ENCODE measurements at regions of chr20 and their contacts with region 1.

Region 1: GRCh38 chr20:54980103-54980960 is 504.9 kb downstream of the DOK5 start:
- DNase-seq: no peak
- H3K4me3 ChIP-seq: no peak overlapping the region
- H3K27ac ChIP-seq: no peak overlapping the region
- H3K4me1 ChIP-seq: no peaks in the 10 kb centered on the region
- H3K27me3 ChIP-seq: no peaks in the 10 kb centered on the region
- CTCF ChIP-seq: peak in 2 of 3 experiments; percentile 28 to 52; a peak in 2 of 4 replicates
- EP300 ChIP-seq: no peak
- POLR2A ChIP-seq: no peak
- RAD21 ChIP-seq: peak; percentile 68 to 71

Region 2: GRCh38 chr20:54957309-54957708 is 23.0 kb before region 1 on chr20:
- CTCF ChIA-PET with region 1: no interaction called
- POLR2A ChIA-PET with region 1: no interaction called
- DNase-seq: no peak
- H3K4me3 ChIP-seq: no peak overlapping the region
- H3K27ac ChIP-seq: no peak overlapping the region
- H3K4me1 ChIP-seq: no peaks in the 10 kb centered on the region
- H3K27me3 ChIP-seq: no peaks in the 10 kb centered on the region
- CTCF ChIP-seq: no peak
- EP300 ChIP-seq: no peak
- POLR2A ChIP-seq: no peak
- RAD21 ChIP-seq: no peak

Region 3: DNA sequence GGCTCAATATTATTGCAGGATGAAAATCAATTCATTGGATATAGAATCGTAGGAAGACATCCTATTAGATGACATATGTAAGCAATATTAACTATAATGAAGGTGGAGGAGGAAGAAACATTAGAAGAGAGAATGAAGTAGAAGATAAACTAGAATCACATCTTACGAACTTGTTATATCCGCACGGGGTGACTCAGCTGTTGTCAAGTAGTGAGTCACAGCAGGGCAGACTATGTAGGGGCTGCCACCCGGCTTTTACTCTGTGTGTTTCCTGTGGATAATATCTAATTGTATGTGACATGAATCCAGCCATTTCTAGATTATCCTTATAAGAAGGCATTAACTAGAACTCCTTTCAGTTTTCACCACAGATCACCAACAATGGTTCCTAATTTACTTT is 15.2 kb after region 1 on chr20:
- CTCF ChIA-PET with region 1: interaction called, 13 read pairs
- POLR2A ChIA-PET with region 1: no interaction called
- DNase-seq: no peak
- H3K4me3 ChIP-seq: no peak overlapping the region
- H3K27ac ChIP-seq: no peak overlapping the region
- H3K4me1 ChIP-seq: peaks cover 0 to 5% (median 0%) of the 10 kb centered on the region in 4 experiments; a peak in 1 of 7 replicates
- H3K27me3 ChIP-seq: no peaks in the 10 kb centered on the region
- CTCF ChIP-seq: no peak
- EP300 ChIP-seq: no peak
- POLR2A ChIP-seq: no peak
- RAD21 ChIP-seq: no peak

Measured in H1 (cell line).